Calu3 (cell line): ENCODE measurements at regions of chr18 and their contacts with region 1.

Region 1: GRCh38 chr18:21444465-21445023 is 156.0 kb downstream of the ESCO1 start:
- DNase-seq: peak; percentile 57
- H3K4me3 Mint-ChIP-seq: no peak overlapping the region
- H3K27ac Mint-ChIP-seq: no peak overlapping the region
- H3K4me1 Mint-ChIP-seq: peaks cover 26% of the 10 kb centered on the region
- H3K27me3 Mint-ChIP-seq: no peaks in the 10 kb centered on the region
- CTCF ChIP-seq: peak; percentile 73

Region 2: GRCh38 chr18:21191596-21192307 is 252.8 kb before region 1 on chr18:
- CTCF ChIA-PET with region 1: interaction called, 7 read pairs
- intact Hi-C with region 1: loop called (anchors 1 kb)
- DNase-seq: peak; percentile 68
- H3K4me3 Mint-ChIP-seq: no peak overlapping the region
- H3K27ac Mint-ChIP-seq: no peak overlapping the region
- H3K4me1 Mint-ChIP-seq: peaks cover 11% of the 10 kb centered on the region
- H3K27me3 Mint-ChIP-seq: no peaks in the 10 kb centered on the region
- CTCF ChIP-seq: peak; percentile 81

Region 3: GRCh38 chr18:21242141-21242779 is 202.3 kb before region 1 on chr18 and contains the start of gene GREB1L:
- CTCF ChIA-PET with region 1: no interaction called
- intact Hi-C with region 1: loop called (anchors 5 kb)
- DNase-seq: peak; percentile 85
- H3K4me3 Mint-ChIP-seq: peak within 1 kb of the TSS; percentile 76
- H3K27ac Mint-ChIP-seq: no peak within 1 kb of the TSS
- H3K4me1 Mint-ChIP-seq: peaks cover 10% of the 10 kb centered on the region
- H3K27me3 Mint-ChIP-seq: no peaks in the 10 kb centered on the region
- CTCF ChIP-seq: no peak
- total RNA-seq, gene GREB1L: 3.8 and 4.5 TPM in 2 replicates

Region 4: DNA sequence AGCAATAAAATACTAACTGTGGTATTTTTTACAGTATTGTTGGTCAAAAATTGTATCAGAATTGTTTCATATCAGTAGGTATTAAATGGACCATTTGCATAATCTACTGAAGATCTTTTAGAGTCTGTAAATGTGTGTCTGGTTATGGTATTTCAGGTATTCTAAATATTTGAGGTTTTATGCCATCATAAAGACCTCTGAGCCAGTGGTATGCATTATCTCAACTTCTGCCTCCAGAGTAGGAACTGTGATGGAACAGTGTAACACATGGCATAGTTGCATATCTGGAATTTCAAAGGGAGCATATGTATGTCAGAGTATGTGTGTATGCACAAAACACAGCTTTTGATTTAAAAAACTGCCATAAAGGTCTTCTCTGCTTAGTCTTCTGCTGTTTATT is 187.2 kb before region 1 on chr18:
- CTCF ChIA-PET with region 1: no interaction called
- intact Hi-C with region 1: loop called (anchors 5 kb)
- DNase-seq: no peak
- H3K4me3 Mint-ChIP-seq: no peak overlapping the region
- H3K27ac Mint-ChIP-seq: no peak overlapping the region
- H3K4me1 Mint-ChIP-seq: no peaks in the 10 kb centered on the region
- H3K27me3 Mint-ChIP-seq: no peaks in the 10 kb centered on the region
- CTCF ChIP-seq: no peak

Region 5: GRCh38 chr18:21391074-21391673 is 53.4 kb before region 1 on chr18:
- CTCF ChIA-PET with region 1: interaction called, 6 read pairs
- intact Hi-C with region 1: loop called (anchors 5 kb)
- DNase-seq: peak; percentile 28
- H3K4me3 Mint-ChIP-seq: no peak overlapping the region
- H3K27ac Mint-ChIP-seq: peak overlapping the region; percentile 64
- H3K4me1 Mint-ChIP-seq: peaks cover 20% of the 10 kb centered on the region
- H3K27me3 Mint-ChIP-seq: no peaks in the 10 kb centered on the region
- CTCF ChIP-seq: no peak

Region 6: DNA sequence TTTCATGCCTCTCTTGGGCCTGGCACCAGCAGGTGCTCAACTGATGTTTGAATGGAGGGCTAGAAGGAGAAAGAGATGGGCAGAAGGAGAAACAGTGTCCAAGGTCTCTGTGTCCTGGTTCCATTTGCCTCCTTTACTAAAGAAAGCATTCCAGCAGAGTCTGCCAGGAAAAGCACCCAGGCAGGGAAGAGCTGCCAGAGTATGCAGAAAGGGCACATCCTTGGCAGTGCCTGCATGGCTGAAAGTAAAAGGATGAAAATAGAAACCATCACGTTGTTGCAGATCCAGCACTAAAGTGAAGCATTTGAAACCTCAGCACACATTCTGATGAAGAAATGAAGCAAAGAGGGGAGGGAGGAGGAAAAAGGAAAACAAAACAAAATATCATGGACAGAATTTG is 13.8 kb after region 1 on chr18:
- CTCF ChIA-PET with region 1: no interaction called
- intact Hi-C with region 1: no loop called
- DNase-seq: no peak
- H3K4me3 Mint-ChIP-seq: no peak overlapping the region
- H3K27ac Mint-ChIP-seq: no peak overlapping the region
- H3K4me1 Mint-ChIP-seq: peaks cover 5% of the 10 kb centered on the region
- H3K27me3 Mint-ChIP-seq: no peaks in the 10 kb centered on the region
- CTCF ChIP-seq: no peak